Heart left ventricle (tissue), 16 donors: ENCODE measurements at regions of chr12 and their contacts with region 1.

Region 1: GRCh38 chr12:131104463-131105350 is 151.0 kb downstream of the ADGRD1 start:
- DNase-seq: peak; percentile 82 to 92 (median 87)
- ATAC-seq: peak; percentile 74 to 94 (median 85)
- H3K4me3 ChIP-seq: no peak overlapping the region
- H3K27ac ChIP-seq: peak overlapping the region in 4 of 12 donors; percentile 6 to 34 (median 10)
- H3K4me1 ChIP-seq: peaks cover 0 to 16% (median 8%) of the 10 kb centered on the region in 12 donors
- H3K27me3 ChIP-seq: no peaks in the 10 kb centered on the region
- CTCF ChIP-seq: peak; percentile 86 to 96 (median 92)
- POLR2A ChIP-seq: no peak

Region 2: GRCh38 chr12:131345521-131346436 is 241.1 kb after region 1 on chr12:
- intact Hi-C with region 1: no loop called
- DNase-seq: peak in 1 of 5 donors; percentile 63
- ATAC-seq: peak in 2 of 4 donors; percentile 17 to 29
- H3K4me3 ChIP-seq: no peak overlapping the region
- H3K27ac ChIP-seq: no peak overlapping the region
- H3K4me1 ChIP-seq: no peaks in the 10 kb centered on the region
- H3K27me3 ChIP-seq: peaks cover 0 to 29% (median 0%) of the 10 kb centered on the region in 9 donors
- CTCF ChIP-seq: no peak
- POLR2A ChIP-seq: no peak

Region 3: GRCh38 chr12:131454418-131455217 is 349.9 kb after region 1 on chr12:
- intact Hi-C with region 1: loop called in 6 of 10 experiments (anchors 5 to 10 kb)
- DNase-seq: peak in 1 of 5 donors; percentile 29
- ATAC-seq: peak in 3 of 4 donors; percentile 85 to 90 (median 86)
- H3K4me3 ChIP-seq: no peak overlapping the region
- H3K27ac ChIP-seq: no peak overlapping the region
- H3K4me1 ChIP-seq: no peaks in the 10 kb centered on the region
- H3K27me3 ChIP-seq: peaks cover 0 to 33% (median 3%) of the 10 kb centered on the region in 9 donors
- CTCF ChIP-seq: peak; percentile 16 to 69 (median 46)
- POLR2A ChIP-seq: no peak

Region 4: DNA sequence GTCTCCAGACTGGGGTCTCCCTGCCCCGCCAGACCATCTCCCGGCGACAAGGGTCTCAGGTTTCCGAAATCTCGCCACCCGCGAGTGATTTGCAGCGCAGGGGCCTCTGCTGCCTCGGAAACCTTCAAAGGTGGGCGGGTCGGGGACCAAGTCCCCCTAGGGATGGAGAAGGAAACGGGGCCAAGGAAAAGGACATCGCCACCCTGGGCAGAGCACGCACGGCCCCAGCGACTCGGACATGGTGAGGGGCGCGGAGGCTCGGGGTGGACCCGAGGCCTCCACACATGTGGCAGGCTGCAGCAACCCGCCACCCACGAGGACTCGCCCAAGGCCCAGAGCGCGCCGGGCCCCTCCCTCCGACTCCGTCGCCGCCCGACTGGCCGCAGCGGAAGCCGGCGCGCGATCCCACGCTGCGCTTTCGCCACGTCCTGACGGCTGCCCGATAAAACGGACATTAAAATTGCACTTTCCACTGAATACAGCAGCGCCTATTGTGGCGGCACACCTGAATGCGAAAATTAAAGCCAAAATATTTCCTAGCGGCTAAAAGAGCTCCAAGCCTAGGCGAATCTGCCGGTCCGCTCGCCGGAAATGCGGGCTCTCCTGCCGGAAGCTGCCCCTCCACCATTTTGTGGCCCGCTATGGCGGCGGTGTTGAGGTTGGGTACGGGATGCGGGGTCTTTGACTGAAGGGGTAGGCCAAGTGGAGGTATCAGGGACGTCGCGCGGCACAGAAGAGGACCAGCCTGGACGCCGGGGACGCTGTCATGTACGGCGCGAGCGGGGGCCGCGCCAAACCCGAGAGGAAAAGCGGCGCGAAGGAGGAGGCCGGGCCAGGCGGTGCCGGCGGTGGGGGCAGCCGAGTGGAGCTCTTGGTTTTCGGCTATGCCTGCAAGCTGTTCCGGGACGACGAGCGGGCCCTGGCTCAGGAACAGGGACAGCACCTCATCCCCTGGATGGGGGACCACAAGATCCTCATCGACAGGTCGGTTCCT is 606.1 kb after region 1 on chr12 and contains the start of gene SFSWAP:
- intact Hi-C with region 1: loop called in 2 of 10 experiments (anchors 10 kb)
- DNase-seq: peak; percentile 74 to 88 (median 80)
- ATAC-seq: peak; percentile 86 to 98 (median 97)
- H3K4me3 ChIP-seq: peak within 1 kb of the TSS; percentile 69 to 100 (median 94)
- H3K27ac ChIP-seq: peak within 1 kb of the TSS; percentile 90 to 99 (median 96)
- H3K4me1 ChIP-seq: peaks cover 2 to 27% (median 21%) of the 10 kb centered on the region in 12 donors
- H3K27me3 ChIP-seq: no peaks in the 10 kb centered on the region
- CTCF ChIP-seq: peak in 1 of 12 donors; percentile 25
- POLR2A ChIP-seq: peak in 1 of 2 donors; percentile 37
- total RNA-seq, gene SFSWAP: 10.4 to 25.1 (median 18.6) TPM